A673 (cell line): ENCODE measurements at regions of chr9 and their contacts with region 1.

Region 1: GRCh38 chr9:129487642-129488409 is 133.1 kb downstream of the C9orf50 start:
- DNase-seq: peak; percentile 92
- H3K4me3 ChIP-seq: peak overlapping the region; percentile 48
- H3K27ac ChIP-seq: peak overlapping the region; percentile 98
- H3K4me1 ChIP-seq: peaks cover 71% of the 10 kb centered on the region
- H3K27me3 ChIP-seq: no peaks in the 10 kb centered on the region
- CTCF ChIP-seq: no peak

Region 2: GRCh38 chr9:128412120-128412790 is 1075.6 kb before region 1 on chr9:
- CTCF ChIA-PET with region 1: no interaction called
- POLR2A ChIA-PET with region 1: no interaction called
- intact Hi-C with region 1: no loop called
- DNase-seq: peak; percentile 88
- H3K4me3 ChIP-seq: no peak overlapping the region
- H3K27ac ChIP-seq: no peak overlapping the region
- H3K4me1 ChIP-seq: peaks cover 15% of the 10 kb centered on the region
- H3K27me3 ChIP-seq: no peaks in the 10 kb centered on the region
- CTCF ChIP-seq: peak; percentile 87

Region 3: DNA sequence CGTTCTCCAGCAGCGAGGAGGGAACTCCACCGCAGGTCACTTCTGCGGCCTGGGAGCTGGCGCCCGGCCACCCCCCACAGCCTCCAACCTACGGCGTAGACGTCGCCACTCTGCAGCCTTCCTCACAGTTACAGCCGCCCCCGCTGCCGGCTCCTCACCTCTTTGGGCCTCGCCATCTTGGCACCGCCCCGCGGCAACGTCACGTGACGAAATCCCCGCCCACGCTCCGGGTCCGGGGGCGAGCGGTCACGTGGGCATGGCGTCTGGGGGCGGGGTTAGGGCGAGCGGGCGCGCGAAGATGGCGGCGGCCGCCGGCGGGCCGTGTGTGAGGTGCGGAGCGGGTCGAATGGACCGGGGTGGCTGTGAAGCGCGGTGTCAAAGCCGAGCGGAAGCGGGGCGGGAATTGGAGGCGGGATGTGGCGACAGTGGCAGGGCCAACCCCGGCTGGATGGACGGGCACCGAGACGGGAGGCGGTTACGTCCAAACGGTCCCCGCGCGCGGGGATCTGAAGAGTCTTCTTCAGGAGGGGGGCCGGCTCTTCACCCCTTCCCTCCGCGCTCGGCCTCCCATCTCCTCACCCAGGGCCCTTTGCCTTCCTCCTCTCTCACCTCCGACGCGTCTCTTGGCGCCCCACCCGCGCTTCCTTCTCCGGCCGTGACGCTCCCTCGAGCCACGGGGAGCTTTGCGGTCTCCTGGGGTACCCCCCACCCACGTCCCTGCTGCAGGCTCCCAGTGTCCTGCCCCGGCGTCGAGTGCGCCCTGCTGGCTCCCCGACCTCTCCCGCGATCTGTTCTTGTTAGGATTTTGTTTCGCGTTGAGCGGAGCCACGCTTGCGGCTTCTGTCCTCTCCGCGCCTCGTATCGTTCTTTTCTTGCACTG is 540.2 kb before region 1 on chr9 and contains the starts of genes DOLK and NUP188:
- CTCF ChIA-PET with region 1: no interaction called
- POLR2A ChIA-PET with region 1: no interaction called
- intact Hi-C with region 1: no loop called
- DNase-seq: peak; percentile 96
- H3K4me3 ChIP-seq: peak within 1 kb of the TSS; percentile 93
- H3K27ac ChIP-seq: peak within 1 kb of the TSS; percentile 93
- H3K4me1 ChIP-seq: peaks cover 5% of the 10 kb centered on the region
- H3K27me3 ChIP-seq: no peaks in the 10 kb centered on the region
- CTCF ChIP-seq: no peak
- total RNA-seq, gene DOLK: 20.6 and 23.2 TPM in 2 replicates
- total RNA-seq, gene NUP188: 147 and 170 TPM in 2 replicates

Region 4: DNA sequence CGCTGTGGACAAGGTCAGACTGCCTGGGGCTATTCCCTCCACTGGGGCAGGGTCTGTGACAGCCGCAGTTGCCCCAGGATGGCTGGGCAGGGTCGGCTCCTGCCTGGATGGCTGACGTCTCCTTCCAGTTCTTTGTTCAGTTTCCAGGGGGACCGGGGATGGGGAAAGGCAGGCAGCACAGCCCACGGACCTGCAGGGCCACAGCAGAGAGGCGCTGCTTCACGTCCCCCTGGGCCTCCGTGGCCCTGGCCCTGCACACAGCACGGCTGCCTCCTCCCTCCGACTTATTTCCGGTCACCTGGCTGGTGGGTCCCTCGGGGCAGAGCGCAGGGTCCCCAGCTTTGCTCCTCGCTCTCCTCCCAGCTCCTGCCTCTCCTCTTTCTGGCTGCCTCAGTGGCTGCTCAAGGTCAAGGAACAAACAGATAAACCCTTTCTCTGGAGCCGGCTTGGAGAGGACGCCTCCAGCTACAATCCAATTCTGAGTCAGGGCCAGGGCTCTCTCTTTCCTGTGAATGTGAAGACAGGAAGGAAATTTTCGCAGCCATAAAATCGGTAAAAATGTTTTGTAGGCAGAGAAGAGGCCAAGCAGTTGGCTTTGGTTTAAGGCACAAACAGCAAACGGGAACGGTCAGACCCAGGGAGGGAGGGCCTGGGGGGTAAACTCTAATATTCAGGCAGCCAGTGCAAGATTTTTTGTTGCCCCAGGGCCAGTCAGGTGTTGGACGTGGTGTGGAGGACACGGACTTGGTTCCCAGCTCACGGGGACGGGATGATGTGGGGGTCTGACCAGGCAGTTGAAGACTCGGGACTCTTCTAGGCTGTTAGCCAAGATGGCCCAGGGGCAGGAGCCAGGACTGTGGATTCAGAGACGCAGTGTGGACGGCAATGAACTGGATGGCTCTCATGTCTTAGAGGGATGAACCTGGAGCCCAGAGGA is 36.5 kb before region 1 on chr9:
- CTCF ChIA-PET with region 1: no interaction called
- POLR2A ChIA-PET with region 1: no interaction called
- intact Hi-C with region 1: no loop called
- DNase-seq: no peak
- H3K4me3 ChIP-seq: no peak overlapping the region
- H3K27ac ChIP-seq: no peak overlapping the region
- H3K4me1 ChIP-seq: peaks cover 12% of the 10 kb centered on the region
- H3K27me3 ChIP-seq: no peaks in the 10 kb centered on the region
- CTCF ChIP-seq: no peak

Region 5: GRCh38 chr9:129569502-129570449 is 82.0 kb after region 1 on chr9:
- CTCF ChIA-PET with region 1: no interaction called
- POLR2A ChIA-PET with region 1: interaction called, 12 read pairs
- intact Hi-C with region 1: no loop called
- DNase-seq: peak; percentile 38
- H3K4me3 ChIP-seq: peak overlapping the region; percentile 57
- H3K27ac ChIP-seq: peak overlapping the region; percentile 79
- H3K4me1 ChIP-seq: peaks cover 35% of the 10 kb centered on the region
- H3K27me3 ChIP-seq: no peaks in the 10 kb centered on the region
- CTCF ChIP-seq: peak; percentile 44; the same call in 1 of the 2 replicates